Cardiac septum (tissue), 1 donor: ENCODE measurements at regions of chr13 and their contacts with region 1.

Region 1: DNA sequence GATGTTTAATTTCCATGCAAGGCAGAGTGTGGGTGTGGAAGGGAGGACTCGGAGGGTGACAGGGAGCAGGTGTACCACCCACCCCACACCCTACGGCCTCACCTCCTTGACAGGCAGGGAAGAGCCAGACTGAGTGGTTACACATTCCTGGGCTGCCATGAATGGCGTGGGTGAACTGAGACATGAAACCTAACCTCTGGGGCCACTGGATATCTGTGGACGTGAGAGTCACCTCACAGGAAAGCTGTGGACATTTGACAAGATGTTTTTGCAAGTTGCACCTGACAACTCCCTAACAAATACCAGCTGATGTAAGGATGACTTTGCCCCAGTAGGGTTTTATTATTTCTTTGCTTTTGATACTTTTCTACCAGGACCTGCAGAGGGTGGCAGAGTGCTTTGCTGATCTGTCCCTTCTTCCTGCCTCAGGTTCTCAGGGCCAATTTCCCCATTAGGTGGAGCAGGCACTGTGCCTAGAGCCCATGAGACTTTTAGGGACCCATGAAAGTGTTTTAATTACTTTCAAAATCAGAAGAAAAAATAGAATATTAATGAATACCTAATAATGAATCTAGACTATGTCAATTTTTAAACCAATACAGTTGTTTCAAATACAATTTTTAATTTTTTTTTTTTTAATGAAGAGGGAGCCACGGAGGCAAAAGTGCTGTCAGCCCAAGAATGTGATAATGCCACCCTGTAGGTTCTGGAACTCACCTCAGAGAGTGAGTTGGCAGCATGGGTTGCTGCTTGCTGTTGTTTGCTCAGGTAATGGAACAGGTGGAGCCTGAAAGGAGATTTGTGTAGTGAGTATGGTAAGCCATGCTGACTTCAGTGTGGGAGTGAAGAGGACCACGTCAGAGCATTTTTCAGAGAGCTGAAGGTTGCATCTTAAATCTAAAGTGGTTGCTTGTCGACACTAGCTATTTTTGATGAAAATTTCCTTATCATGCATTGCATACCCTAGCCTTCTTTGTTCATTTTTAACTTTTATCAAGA is 58.0 kb upstream of the CYSLTR2 start:
- DNase-seq: peak; percentile 79

Region 2: DNA sequence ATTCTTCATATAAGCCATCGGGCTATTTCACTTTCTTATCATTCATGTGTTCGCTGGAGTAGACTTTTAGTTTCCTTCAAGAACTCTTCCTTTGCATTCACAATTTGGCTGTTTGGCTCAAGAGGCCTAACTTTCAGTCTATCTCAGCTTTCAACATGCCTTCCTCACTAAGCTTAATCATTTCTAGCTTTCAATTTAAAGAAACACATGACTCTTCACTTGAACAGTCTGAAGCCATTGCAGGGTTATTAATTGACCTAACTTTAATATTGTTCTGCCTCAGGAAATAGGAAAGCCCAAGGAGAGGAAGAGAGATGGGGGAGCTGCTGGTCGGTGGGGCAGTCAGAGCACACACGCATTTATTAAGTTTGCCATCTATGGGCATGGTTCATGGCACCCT is 752.7 kb before region 1 on chr13:
- intact Hi-C with region 1: no loop called
- DNase-seq: no peak

Region 3: GRCh38 chr13:48571126-48571913 is 24.4 kb before region 1 on chr13:
- intact Hi-C with region 1: no loop called
- DNase-seq: no peak

Region 4: GRCh38 chr13:48769107-48769704 is 173.5 kb after region 1 on chr13:
- intact Hi-C with region 1: loop called (anchors 1 kb)
- DNase-seq: no peak